CD8-positive, alpha-beta T cell (primary cell): ENCODE measurements at regions of chr4 and their contacts with region 1.

Region 1: GRCh38 chr4:53461244-53461643 is 83.8 kb downstream of the FIP1L1 start:
- DNase-seq: no peak
- ATAC-seq: no peak
- H3K4me3 ChIP-seq: no peak overlapping the region
- H3K4me3 Mint-ChIP-seq: no peak overlapping the region
- H3K27ac ChIP-seq: no peak overlapping the region
- H3K27ac Mint-ChIP-seq: no peak overlapping the region
- H3K4me1 ChIP-seq: no peaks in the 10 kb centered on the region
- H3K4me1 Mint-ChIP-seq: no peaks in the 10 kb centered on the region
- H3K27me3 ChIP-seq: no peaks in the 10 kb centered on the region
- H3K27me3 Mint-ChIP-seq: no peaks in the 10 kb centered on the region
- CTCF ChIP-seq: no peak

Region 2: GRCh38 chr4:53196882-53197771 is 264.1 kb before region 1 on chr4:
- CTCF ChIA-PET with region 1: no interaction called
- POLR2A ChIA-PET with region 1: no interaction called
- intact Hi-C with region 1: loop called in 1 of 2 experiments (anchors 10 kb)
- DNase-seq: peak in 2 of 9 experiments; percentile 62 to 69
- ATAC-seq: no peak
- H3K4me3 ChIP-seq: no peak overlapping the region
- H3K4me3 Mint-ChIP-seq: no peak overlapping the region
- H3K27ac ChIP-seq: no peak overlapping the region
- H3K27ac Mint-ChIP-seq: no peak overlapping the region
- H3K4me1 ChIP-seq: no peaks in the 10 kb centered on the region
- H3K4me1 Mint-ChIP-seq: no peaks in the 10 kb centered on the region
- H3K27me3 ChIP-seq: no peaks in the 10 kb centered on the region
- H3K27me3 Mint-ChIP-seq: no peaks in the 10 kb centered on the region
- CTCF ChIP-seq: peak; percentile 79